ENCODE measurements at regions of chr11 and their contacts with region 1.

Region 1: GRCh38 chr11:13772223-13773046 is 104.0 kb downstream of the FAR1 start:
- DNase-seq: peak in 4 of 5 donors; percentile 72 to 78 (median 73)
- H3K4me3 ChIP-seq: no peak overlapping the region
- H3K4me3 Mint-ChIP-seq: no peak overlapping the region
- H3K27ac ChIP-seq: no peak overlapping the region
- H3K27ac Mint-ChIP-seq: no peak overlapping the region
- H3K4me1 ChIP-seq: no peaks in the 10 kb centered on the region
- H3K4me1 Mint-ChIP-seq: peaks cover 2 to 6% (median 5%) of the 10 kb centered on the region in 4 donors
- H3K27me3 ChIP-seq: no peaks in the 10 kb centered on the region
- H3K27me3 Mint-ChIP-seq: peaks cover 4% of the 10 kb centered on the region in 2 donors

Region 2: GRCh38 chr11:13784855-13785254 is 12.4 kb after region 1 on chr11:
- CTCF ChIA-PET with region 1: interaction called, 27 read pairs
- POLR2A ChIA-PET with region 1: no interaction called
- intact Hi-C with region 1: no loop called
- DNase-seq: no peak
- H3K4me3 ChIP-seq: no peak overlapping the region
- H3K4me3 Mint-ChIP-seq: no peak overlapping the region
- H3K27ac ChIP-seq: no peak overlapping the region
- H3K27ac Mint-ChIP-seq: no peak overlapping the region
- H3K4me1 ChIP-seq: no peaks in the 10 kb centered on the region
- H3K4me1 Mint-ChIP-seq: peaks cover 0 to 3% (median 0%) of the 10 kb centered on the region in 4 donors
- H3K27me3 ChIP-seq: no peaks in the 10 kb centered on the region
- H3K27me3 Mint-ChIP-seq: no peaks in the 10 kb centered on the region

Region 3: GRCh38 chr11:13942983-13943382 is 170.5 kb after region 1 on chr11:
- CTCF ChIA-PET with region 1: interaction called, 13 read pairs
- POLR2A ChIA-PET with region 1: interaction called, 3 read pairs
- intact Hi-C with region 1: no loop called
- DNase-seq: no peak
- H3K4me3 ChIP-seq: no peak overlapping the region
- H3K4me3 Mint-ChIP-seq: no peak overlapping the region
- H3K27ac ChIP-seq: no peak overlapping the region
- H3K27ac Mint-ChIP-seq: peak overlapping the region in 2 of 7 donors; percentile 9 to 32
- H3K4me1 ChIP-seq: peaks cover 56% of the 10 kb centered on the region
- H3K4me1 Mint-ChIP-seq: peaks cover 40 to 59% (median 48%) of the 10 kb centered on the region in 4 donors
- H3K27me3 ChIP-seq: no peaks in the 10 kb centered on the region
- H3K27me3 Mint-ChIP-seq: no peaks in the 10 kb centered on the region

Region 4: DNA sequence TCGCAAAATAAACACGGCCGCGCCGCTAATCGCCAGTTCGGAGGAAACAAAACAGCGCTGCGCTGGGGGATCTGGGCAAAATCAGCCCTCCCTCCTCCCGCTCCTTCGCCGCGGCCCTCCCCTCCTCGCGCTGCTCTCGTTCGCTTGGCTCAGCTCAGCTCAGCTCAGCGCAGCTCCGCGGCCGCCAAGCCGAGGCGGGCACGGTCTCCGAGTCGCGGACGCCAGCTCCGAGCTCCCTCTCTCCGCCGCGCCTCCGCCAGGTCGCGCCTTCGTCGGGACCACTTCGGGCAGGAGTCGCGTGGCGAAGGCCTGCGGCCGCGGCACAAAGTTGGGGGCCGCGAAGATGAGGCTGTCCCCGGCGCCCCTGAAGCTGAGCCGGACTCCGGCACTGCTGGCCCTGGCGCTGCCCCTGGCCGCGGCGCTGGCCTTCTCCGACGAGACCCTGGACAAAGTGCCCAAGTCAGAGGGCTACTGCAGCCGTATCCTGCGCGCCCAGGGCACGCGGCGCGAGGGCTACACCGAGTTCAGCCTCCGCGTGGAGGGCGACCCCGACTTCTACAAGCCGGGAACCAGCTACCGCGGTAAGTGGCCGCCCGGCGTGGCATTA is 190.2 kb after region 1 on chr11 and contains the start of gene SPON1:
- CTCF ChIA-PET with region 1: interaction called, 47 read pairs
- POLR2A ChIA-PET with region 1: interaction called, 11 read pairs
- intact Hi-C with region 1: loop called (anchors 2 kb)
- DNase-seq: peak; percentile 33 to 63 (median 47)
- H3K4me3 ChIP-seq: peak within 1 kb of the TSS in 1 of 2 donors; percentile 33
- H3K4me3 Mint-ChIP-seq: peak within 1 kb of the TSS; percentile 69 to 95 (median 82)
- H3K27ac ChIP-seq: no peak within 1 kb of the TSS
- H3K27ac Mint-ChIP-seq: peak within 1 kb of the TSS in 1 of 7 donors; percentile 6
- H3K4me1 ChIP-seq: peaks cover 26% of the 10 kb centered on the region
- H3K4me1 Mint-ChIP-seq: peaks cover 0 to 22% (median 18%) of the 10 kb centered on the region in 4 donors
- H3K27me3 ChIP-seq: peaks cover 27% of the 10 kb centered on the region
- H3K27me3 Mint-ChIP-seq: peaks cover 33 to 43% of the 10 kb centered on the region in 2 donors
- total RNA-seq, gene SPON1: 58.1 to 60.4 TPM

Region 5: GRCh38 chr11:14148653-14149273 is 376.3 kb after region 1 on chr11:
- CTCF ChIA-PET with region 1: interaction called, 140 read pairs
- POLR2A ChIA-PET with region 1: interaction called, 10 read pairs
- intact Hi-C with region 1: loop called (anchors 1 kb)
- DNase-seq: peak in 4 of 5 donors; percentile 39 to 51 (median 42)
- H3K4me3 ChIP-seq: no peak overlapping the region
- H3K4me3 Mint-ChIP-seq: no peak overlapping the region
- H3K27ac ChIP-seq: no peak overlapping the region
- H3K27ac Mint-ChIP-seq: peak overlapping the region in 1 of 7 donors; percentile 10
- H3K4me1 ChIP-seq: no peaks in the 10 kb centered on the region
- H3K4me1 Mint-ChIP-seq: peaks cover 0 to 4% (median 1%) of the 10 kb centered on the region in 4 donors
- H3K27me3 ChIP-seq: no peaks in the 10 kb centered on the region
- H3K27me3 Mint-ChIP-seq: no peaks in the 10 kb centered on the region

Region 6: GRCh38 chr11:14308114-14308896 is 535.9 kb after region 1 on chr11:
- CTCF ChIA-PET with region 1: interaction called, 12 read pairs
- POLR2A ChIA-PET with region 1: no interaction called
- intact Hi-C with region 1: loop called (anchors 5 kb)
- DNase-seq: peak in 4 of 5 donors; percentile 20 to 29 (median 24)
- H3K4me3 ChIP-seq: no peak overlapping the region
- H3K4me3 Mint-ChIP-seq: no peak overlapping the region
- H3K27ac ChIP-seq: no peak overlapping the region
- H3K27ac Mint-ChIP-seq: no peak overlapping the region
- H3K4me1 ChIP-seq: peaks cover 23% of the 10 kb centered on the region
- H3K4me1 Mint-ChIP-seq: peaks cover 7 to 12% (median 10%) of the 10 kb centered on the region in 4 donors
- H3K27me3 ChIP-seq: no peaks in the 10 kb centered on the region
- H3K27me3 Mint-ChIP-seq: no peaks in the 10 kb centered on the region

Region 7: DNA sequence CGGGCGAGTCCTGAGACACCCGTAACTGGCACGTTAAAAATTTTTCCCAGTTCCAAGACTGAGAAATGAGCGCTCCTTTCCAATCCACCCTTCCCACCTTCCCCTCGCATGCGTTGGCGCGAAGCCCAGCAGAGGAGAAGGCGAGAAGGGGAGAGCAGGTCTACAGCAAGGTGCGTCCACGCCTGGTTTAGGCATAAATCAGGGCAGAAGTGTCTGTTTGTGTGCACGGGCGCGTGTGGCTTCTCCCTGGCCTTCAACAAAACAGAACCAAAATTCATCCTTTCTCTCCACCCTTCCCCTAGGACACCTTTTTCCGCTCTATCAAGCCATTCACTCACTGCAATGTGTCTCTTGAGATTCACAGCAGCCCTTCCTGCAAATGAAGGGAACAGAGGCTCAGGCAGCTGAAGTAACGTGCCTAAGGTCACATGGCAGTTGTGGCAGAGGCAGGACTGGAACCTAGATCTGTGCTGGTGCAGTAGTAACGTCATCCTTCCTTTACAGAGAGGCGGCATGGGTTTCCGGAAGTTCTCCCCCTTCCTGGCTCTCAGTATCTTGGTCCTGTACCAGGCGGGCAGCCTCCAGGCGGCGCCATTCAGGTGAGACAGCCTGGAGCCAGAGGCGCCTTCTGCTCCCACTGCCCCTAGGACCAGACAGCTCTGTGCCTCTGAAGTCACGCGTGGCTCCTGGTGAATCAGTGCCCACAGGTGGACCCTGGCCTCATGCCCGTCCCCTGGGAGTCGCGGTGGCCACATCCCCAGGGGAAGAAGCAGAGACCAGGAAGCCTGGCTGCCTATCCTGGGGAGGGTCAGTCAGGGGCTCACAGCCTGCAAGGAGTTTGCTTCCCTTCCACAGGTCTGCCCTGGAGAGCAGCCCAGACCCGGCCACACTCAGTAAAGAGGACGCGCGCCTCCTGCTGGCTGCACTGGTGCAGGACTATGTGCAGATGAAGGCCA is 1302.0 kb after region 1 on chr11:
- CTCF ChIA-PET with region 1: interaction called, 4 read pairs
- POLR2A ChIA-PET with region 1: no interaction called
- intact Hi-C with region 1: loop called (anchors 1 kb)
- DNase-seq: peak; percentile 74 to 85 (median 76)
- H3K4me3 ChIP-seq: peak overlapping the region; percentile 54 to 57
- H3K4me3 Mint-ChIP-seq: peak overlapping the region; percentile 73 to 90 (median 84)
- H3K27ac ChIP-seq: no peak overlapping the region
- H3K27ac Mint-ChIP-seq: peak overlapping the region; percentile 52 to 79 (median 68)
- H3K4me1 ChIP-seq: peaks cover 17% of the 10 kb centered on the region
- H3K4me1 Mint-ChIP-seq: peaks cover 7 to 21% (median 15%) of the 10 kb centered on the region in 4 donors
- H3K27me3 ChIP-seq: peaks cover 3% of the 10 kb centered on the region
- H3K27me3 Mint-ChIP-seq: peaks cover 1 to 9% of the 10 kb centered on the region in 2 donors

Measured in CD4-positive, alpha-beta memory T cell (primary cell).